HepG2 (cell line): ENCODE measurements at regions of chr16 and their contacts with region 1.

Region 1: DNA sequence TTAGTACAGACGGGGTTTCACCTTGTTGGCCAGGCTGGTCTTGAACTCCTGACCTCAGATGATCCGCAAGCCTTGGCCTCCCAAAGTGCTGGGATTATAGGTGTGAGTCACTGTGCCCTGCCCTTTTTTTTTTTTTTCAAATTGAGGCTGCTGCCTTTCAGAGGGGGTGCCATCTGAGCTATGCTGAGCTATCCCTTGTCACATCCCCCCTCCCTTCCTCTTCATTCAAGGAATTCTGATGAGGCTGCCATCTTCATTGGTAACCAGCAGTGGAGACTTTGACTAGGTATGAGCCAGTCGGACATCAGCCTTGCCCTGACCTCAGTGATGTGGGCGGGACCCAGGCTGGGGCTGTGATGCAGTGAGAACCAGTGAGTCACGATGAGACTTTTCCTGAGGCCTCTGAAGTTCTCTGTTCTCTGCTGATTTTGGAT is 24.4 kb upstream of the GPT2 start:
- DNase-seq: peak; percentile 82
- ATAC-seq: peak; percentile 51
- H3K4me3 ChIP-seq: no peak overlapping the region
- H3K27ac ChIP-seq: peak overlapping the region; percentile 17
- H3K4me1 ChIP-seq: peaks cover 91% of the 10 kb centered on the region
- H3K27me3 ChIP-seq: no peaks in the 10 kb centered on the region
- CTCF ChIP-seq: no peak
- EP300 ChIP-seq: no peak
- POLR2A ChIP-seq: no peak
- RAD21 ChIP-seq: no peak

Region 2: DNA sequence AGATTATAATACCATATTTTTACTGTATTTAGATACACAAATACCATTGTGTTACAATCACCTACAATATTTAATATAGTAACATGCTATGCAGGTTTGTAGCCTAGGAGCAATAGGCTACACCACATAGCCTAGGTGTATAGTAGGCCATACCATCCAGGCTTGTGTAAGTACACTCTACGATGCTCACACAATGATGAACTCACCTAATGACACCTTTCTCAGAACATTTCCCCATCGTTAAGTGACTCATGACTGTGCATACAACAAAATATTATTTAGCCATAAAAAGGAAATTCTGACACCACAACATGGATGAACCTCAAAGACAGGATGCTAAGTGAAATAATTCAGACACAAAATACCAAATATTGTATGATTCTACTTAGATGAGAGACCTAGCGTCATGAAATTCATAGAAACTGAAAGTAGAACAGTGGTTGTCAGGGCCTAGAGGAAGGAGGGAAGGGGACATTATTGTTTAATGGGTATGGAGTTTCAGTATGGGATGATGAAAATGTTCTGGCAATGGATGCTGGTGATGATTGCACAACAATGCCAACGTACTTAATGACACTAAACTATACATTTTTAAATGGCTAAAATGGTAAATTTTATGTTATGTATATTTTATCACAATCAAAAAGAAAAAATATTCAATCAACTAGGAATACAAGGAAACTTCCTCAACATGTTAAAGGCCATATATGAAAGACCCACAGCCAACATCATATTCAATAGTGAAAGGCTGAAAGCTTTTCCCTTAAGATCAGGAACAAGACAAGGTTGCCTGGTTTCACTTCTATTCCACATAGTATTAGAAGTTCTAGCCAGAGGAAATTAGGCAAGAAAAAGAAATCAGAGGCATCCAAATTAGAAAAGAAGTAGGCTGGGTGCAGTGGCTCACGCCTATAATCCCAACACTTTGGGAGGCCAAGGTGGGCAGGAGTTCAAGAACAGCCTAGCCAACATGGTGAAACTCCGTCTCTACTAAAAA is 22.9 kb before region 1 on chr16:
- CTCF ChIA-PET with region 1: no interaction called
- POLR2A ChIA-PET with region 1: no interaction called
- in situ Hi-C with region 1: no loop called
- intact Hi-C with region 1: no loop called
- DNase-seq: no peak
- ATAC-seq: no peak
- H3K4me3 ChIP-seq: peak overlapping the region in 1 of 3 experiments; percentile 9; a peak in 1 of 6 replicates
- H3K27ac ChIP-seq: no peak overlapping the region
- H3K4me1 ChIP-seq: peaks cover 54% of the 10 kb centered on the region
- H3K27me3 ChIP-seq: no peaks in the 10 kb centered on the region
- CTCF ChIP-seq: no peak
- EP300 ChIP-seq: no peak
- POLR2A ChIP-seq: no peak
- RAD21 ChIP-seq: no peak

Region 3: GRCh38 chr16:46871587-46871986 is 11.9 kb after region 1 on chr16:
- CTCF ChIA-PET with region 1: no interaction called
- POLR2A ChIA-PET with region 1: interaction called, 59 read pairs
- in situ Hi-C with region 1: no loop called
- intact Hi-C with region 1: no loop called
- DNase-seq: no peak
- ATAC-seq: no peak
- H3K4me3 ChIP-seq: no peak overlapping the region
- H3K27ac ChIP-seq: no peak overlapping the region
- H3K4me1 ChIP-seq: peaks cover 100% of the 10 kb centered on the region
- H3K27me3 ChIP-seq: no peaks in the 10 kb centered on the region
- CTCF ChIP-seq: no peak
- EP300 ChIP-seq: no peak
- POLR2A ChIP-seq: no peak
- RAD21 ChIP-seq: no peak

Region 4: DNA sequence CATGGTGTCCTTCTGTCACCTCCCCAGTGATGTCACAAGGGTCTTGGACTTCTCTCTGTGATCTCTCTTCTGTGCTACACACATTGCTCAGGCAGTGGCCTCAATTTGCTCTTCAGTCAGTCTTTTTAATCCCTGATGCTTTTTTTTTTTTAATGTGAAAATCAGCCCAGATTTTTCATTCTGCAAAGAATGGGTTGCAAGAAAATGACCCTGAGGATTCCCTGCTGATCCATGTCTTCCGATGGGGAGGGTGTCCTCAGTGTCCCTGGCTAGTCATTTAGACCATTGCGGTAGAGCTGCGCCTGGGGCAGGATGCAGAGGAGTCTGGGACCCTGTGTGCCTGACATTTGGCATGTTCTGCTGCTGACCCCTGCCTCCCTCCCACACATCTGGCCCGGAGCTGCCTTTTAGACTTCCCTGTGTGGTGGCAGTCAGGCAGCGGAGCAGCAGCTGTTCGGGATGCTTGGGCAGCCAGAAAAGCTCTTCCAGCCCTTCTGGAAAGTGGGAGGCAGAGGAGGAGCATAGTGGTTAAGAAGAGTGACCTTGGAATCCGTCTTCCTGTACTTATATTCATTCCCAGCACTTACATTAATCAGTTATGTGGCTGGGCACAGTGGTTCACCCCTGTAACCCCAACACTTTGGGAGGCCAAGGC is 36.7 kb after region 1 on chr16:
- CTCF ChIA-PET with region 1: interaction called, 3 read pairs
- POLR2A ChIA-PET with region 1: interaction called, 21 read pairs
- in situ Hi-C with region 1: no loop called
- intact Hi-C with region 1: no loop called
- DNase-seq: no peak
- ATAC-seq: peak; percentile 7; the same call in 2 of the 3 replicates
- H3K4me3 ChIP-seq: peak overlapping the region in 1 of 3 experiments; percentile 15; a peak in 1 of 6 replicates
- H3K27ac ChIP-seq: peak overlapping the region; percentile 80
- H3K4me1 ChIP-seq: peaks cover 79% of the 10 kb centered on the region
- H3K27me3 ChIP-seq: no peaks in the 10 kb centered on the region
- CTCF ChIP-seq: no peak
- EP300 ChIP-seq: no peak
- POLR2A ChIP-seq: peak in 1 of 2 experiments; percentile 10; a peak in 1 of 4 replicates
- RAD21 ChIP-seq: no peak

Region 5: GRCh38 chr16:47229053-47230050 is 369.6 kb after region 1 on chr16:
- CTCF ChIA-PET with region 1: no interaction called
- POLR2A ChIA-PET with region 1: no interaction called
- in situ Hi-C with region 1: no loop called
- intact Hi-C with region 1: no loop called
- DNase-seq: no peak
- ATAC-seq: no peak
- H3K4me3 ChIP-seq: no peak overlapping the region
- H3K27ac ChIP-seq: no peak overlapping the region
- H3K4me1 ChIP-seq: no peaks in the 10 kb centered on the region
- H3K27me3 ChIP-seq: no peaks in the 10 kb centered on the region
- CTCF ChIP-seq: no peak
- EP300 ChIP-seq: no peak
- POLR2A ChIP-seq: no peak
- RAD21 ChIP-seq: no peak